Naive thymus-derived CD4-positive, alpha-beta T cell (primary cell): ENCODE measurements at regions of chr17 and their contacts with region 1.

Region 1: GRCh38 chr17:30808785-30809286 is 15.7 kb downstream of the CRLF3 start:
- DNase-seq: peak in 7 of 9 donors; percentile 69 to 89 (median 83)
- ATAC-seq: peak; percentile 95
- H3K4me3 ChIP-seq: peak overlapping the region; percentile 38
- H3K4me3 Mint-ChIP-seq: peak overlapping the region; percentile 84 to 94 (median 88)
- H3K27ac ChIP-seq: peak overlapping the region; percentile 81
- H3K27ac Mint-ChIP-seq: peak overlapping the region; percentile 96 to 99 (median 97)
- H3K4me1 ChIP-seq: peaks cover 41 to 63% of the 10 kb centered on the region in 2 donors
- H3K4me1 Mint-ChIP-seq: peaks cover 52 to 84% (median 72%) of the 10 kb centered on the region in 7 donors
- H3K27me3 ChIP-seq: no peaks in the 10 kb centered on the region
- H3K27me3 Mint-ChIP-seq: no peaks in the 10 kb centered on the region

Region 2: GRCh38 chr17:30716461-30717300 is 92.2 kb before region 1 on chr17:
- CTCF ChIA-PET with region 1: no interaction called
- POLR2A ChIA-PET with region 1: no interaction called
- intact Hi-C with region 1: no loop called
- DNase-seq: no peak
- ATAC-seq: no peak
- H3K4me3 ChIP-seq: no peak overlapping the region
- H3K4me3 Mint-ChIP-seq: no peak overlapping the region
- H3K27ac ChIP-seq: no peak overlapping the region
- H3K27ac Mint-ChIP-seq: no peak overlapping the region
- H3K4me1 ChIP-seq: peaks cover 0 to 3% of the 10 kb centered on the region in 2 donors
- H3K4me1 Mint-ChIP-seq: peaks cover 5 to 12% (median 9%) of the 10 kb centered on the region in 7 donors
- H3K27me3 ChIP-seq: no peaks in the 10 kb centered on the region
- H3K27me3 Mint-ChIP-seq: peaks cover 0 to 2% (median 0%) of the 10 kb centered on the region in 5 donors

Region 3: DNA sequence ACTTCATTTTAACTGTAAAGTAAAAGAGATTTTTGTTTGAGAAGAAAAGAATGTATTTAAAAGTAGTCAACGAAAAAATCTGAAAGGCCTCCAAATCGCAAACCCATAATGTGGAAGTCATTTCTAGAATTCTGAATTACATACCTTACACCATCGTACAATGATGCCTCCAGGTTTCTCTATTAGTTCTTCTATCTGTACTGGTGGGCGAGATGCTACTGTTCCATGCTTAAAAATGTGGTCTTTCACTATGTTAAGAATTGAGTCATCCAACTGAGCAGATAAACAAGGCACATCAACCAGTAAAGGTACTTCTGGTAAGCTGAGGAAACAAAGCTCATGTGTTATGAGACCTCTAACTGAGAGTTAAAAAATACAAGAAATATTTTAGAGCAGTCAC is 12.8 kb before region 1 on chr17:
- CTCF ChIA-PET with region 1: interaction called, 3 read pairs
- POLR2A ChIA-PET with region 1: no interaction called
- intact Hi-C with region 1: loop called in 1 of 2 experiments (anchors 1 kb)
- DNase-seq: no peak
- ATAC-seq: no peak
- H3K4me3 ChIP-seq: no peak overlapping the region
- H3K4me3 Mint-ChIP-seq: no peak overlapping the region
- H3K27ac ChIP-seq: no peak overlapping the region
- H3K27ac Mint-ChIP-seq: peak overlapping the region in 7 of 9 donors; percentile 13 to 81 (median 60)
- H3K4me1 ChIP-seq: no peaks in the 10 kb centered on the region
- H3K4me1 Mint-ChIP-seq: peaks cover under 1 to 20% (median 19%) of the 10 kb centered on the region in 7 donors
- H3K27me3 ChIP-seq: no peaks in the 10 kb centered on the region
- H3K27me3 Mint-ChIP-seq: no peaks in the 10 kb centered on the region